Activated CD4-positive, alpha-beta T cell treated with anti-CD3 and anti-CD28 coated beads, Interleukin-2, amount 10 ng/mL, durations not matched to agents 7 days and 5 days (primary cell): ENCODE measurements at regions of chr16 and their contacts with region 1.

Region 1: GRCh38 chr16:22307838-22308237 is 10.6 kb downstream of the POLR3E start:
- DNase-seq: no peak
- H3K4me3 Mint-ChIP-seq: no peak overlapping the region
- H3K27ac Mint-ChIP-seq: no peak overlapping the region
- H3K4me1 Mint-ChIP-seq: peaks cover 2% of the 10 kb centered on the region
- H3K27me3 Mint-ChIP-seq: no peaks in the 10 kb centered on the region

Region 2: GRCh38 chr16:22318690-22319358 is 11.0 kb after region 1 on chr16:
- CTCF ChIA-PET with region 1: interaction called, 14 read pairs
- POLR2A ChIA-PET with region 1: no interaction called
- DNase-seq: peak; percentile 71
- H3K4me3 Mint-ChIP-seq: no peak overlapping the region
- H3K27ac Mint-ChIP-seq: no peak overlapping the region
- H3K4me1 Mint-ChIP-seq: peaks cover 7% of the 10 kb centered on the region
- H3K27me3 Mint-ChIP-seq: no peaks in the 10 kb centered on the region